Sciatic nerve (tissue), 2 donors: ENCODE measurements at regions of chr7 and their contacts with region 1.

Region 1: GRCh38 chr7:156167417-156167807 is 355.1 kb upstream of the SHH start:
- DNase-seq: no peak
- ATAC-seq: no peak

Region 2: GRCh38 chr7:154451480-154452457 is 1715.6 kb before region 1 on chr7:
- intact Hi-C with region 1: no loop called
- DNase-seq: no peak
- ATAC-seq: no peak

Region 3: DNA sequence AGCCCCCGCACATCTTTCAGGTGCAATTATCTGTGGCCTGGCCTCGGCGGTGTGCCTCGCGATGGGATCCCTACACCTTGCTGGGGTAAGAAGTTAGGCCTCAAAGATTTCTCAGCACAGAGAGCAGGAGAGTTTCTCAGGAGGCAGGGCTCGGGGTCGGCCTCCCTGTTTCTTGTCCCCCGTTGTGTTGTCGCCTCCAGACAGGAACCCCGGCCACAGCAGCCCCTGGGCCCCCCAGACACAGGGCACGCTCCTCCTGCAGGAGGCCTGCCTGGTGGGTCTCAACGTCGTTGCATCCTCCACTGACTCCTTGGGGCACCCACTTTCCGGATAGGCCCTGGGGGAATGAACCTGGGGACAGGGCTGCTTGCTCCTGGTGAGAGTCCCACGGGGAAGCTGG is 126.0 kb before region 1 on chr7:
- intact Hi-C with region 1: loop called (anchors 1 kb)
- DNase-seq: no peak
- ATAC-seq: no peak